Sciatic nerve (tissue), 2 donors: ENCODE measurements at regions of chr3 and their contacts with region 1.

Region 1: DNA sequence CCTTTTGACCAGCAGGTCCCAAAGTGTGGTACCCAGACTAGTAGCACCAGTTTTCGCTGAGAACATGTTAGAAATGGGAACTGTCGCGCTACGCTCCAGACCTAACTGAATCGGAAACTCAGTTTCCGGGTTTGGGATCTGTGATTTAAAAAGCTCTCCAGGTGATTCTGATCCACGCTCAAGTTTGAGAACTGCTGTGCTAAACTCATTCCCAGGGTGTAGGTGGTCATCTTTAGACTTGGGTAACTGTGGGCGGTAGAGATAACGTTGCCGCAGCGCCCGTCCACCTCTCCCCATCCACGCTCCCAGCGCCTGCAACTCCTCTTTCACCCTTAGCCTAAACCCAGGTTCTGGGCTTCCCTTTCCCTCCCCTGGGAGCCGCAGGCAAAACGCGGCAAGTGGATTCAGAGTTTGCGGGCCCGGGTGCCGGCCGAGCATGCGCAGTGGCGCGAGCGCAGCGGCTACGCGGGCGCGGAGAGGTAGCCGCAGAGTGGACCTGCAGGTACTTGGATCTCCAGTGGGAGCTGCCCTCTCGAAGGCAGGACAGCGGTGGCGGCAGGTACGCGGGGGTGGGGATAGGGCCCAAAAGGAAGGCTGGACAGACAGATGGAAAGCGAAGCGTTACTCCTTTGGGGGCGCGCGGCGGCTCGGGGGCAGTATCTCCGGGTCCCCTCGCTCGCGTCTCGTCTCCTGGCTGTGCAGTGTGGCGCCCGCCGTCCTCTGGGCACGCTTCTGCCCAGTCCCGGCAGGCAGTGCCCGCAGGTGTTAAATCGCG is at the start of gene PLS1:
- DNase-seq: peak; percentile 82
- ATAC-seq: peak; percentile 96
- total RNA-seq, gene PLS1: 0.53 TPM

Region 2: GRCh38 chr3:142993958-142994442 is 397.9 kb after region 1 on chr3:
- intact Hi-C with region 1: loop called (anchors 10 kb)
- DNase-seq: peak; percentile 70
- ATAC-seq: peak; percentile 78